ENCODE measurements at regions of chr9 and their contacts with region 1.

Region 1: DNA sequence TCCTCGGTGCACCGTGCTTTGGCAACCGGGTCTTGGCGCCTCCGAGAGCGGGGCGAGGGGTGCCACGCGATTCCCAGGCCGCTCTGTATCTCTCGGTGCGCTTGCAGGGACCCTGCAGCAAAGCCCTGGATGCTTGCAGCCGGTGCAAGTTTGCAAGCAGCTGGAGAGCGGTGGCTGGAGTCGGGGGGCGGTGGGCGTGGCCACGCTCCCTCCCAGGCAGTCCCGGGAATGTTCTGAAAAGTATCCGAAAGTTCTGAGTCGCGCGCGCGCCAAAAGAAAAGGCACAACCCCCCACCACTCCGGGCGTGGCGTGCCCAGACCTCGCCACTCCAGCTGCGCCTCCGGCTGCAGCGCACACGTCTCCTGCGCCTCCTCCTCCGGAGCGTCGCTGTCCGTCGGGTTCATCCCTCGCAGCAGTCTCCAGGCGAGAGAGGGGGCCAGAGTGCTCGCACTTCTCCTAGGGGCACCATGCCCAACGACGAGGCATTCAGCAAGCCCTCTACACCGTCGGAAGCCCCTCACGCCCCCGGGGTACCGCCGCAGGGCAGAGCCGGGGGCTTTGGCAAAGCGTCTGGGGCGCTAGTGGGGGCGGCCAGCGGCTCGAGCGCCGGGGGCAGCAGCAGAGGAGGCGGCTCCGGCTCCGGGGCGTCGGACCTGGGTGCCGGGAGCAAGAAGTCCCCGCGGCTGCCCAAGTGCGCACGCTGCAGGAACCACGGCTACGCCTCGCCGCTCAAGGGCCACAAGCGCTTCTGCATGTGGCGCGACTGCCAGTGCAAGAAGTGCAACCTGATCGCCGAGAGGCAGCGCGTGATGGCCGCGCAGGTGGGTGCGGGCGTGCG is at the start of gene DMRT1:
- DNase-seq: no peak
- H3K4me3 Mint-ChIP-seq: no peak within 1 kb of the TSS
- H3K27ac Mint-ChIP-seq: no peak within 1 kb of the TSS
- H3K4me1 Mint-ChIP-seq: peaks cover 17% of the 10 kb centered on the region
- H3K27me3 Mint-ChIP-seq: peaks cover 47% of the 10 kb centered on the region
- total RNA-seq, gene DMRT1: not detected

Region 2: GRCh38 chr9:971901-972500 is 130.4 kb after region 1 on chr9:
- CTCF ChIA-PET with region 1: no interaction called
- POLR2A ChIA-PET with region 1: no interaction called
- intact Hi-C with region 1: loop called (anchors 5 kb)
- DNase-seq: peak; percentile 24
- H3K4me3 Mint-ChIP-seq: peak overlapping the region; percentile 8
- H3K27ac Mint-ChIP-seq: no peak overlapping the region
- H3K4me1 Mint-ChIP-seq: peaks cover 22% of the 10 kb centered on the region
- H3K27me3 Mint-ChIP-seq: peaks cover 68% of the 10 kb centered on the region